ENCODE measurements at regions of chr17 and their contacts with region 1.

Region 1: DNA sequence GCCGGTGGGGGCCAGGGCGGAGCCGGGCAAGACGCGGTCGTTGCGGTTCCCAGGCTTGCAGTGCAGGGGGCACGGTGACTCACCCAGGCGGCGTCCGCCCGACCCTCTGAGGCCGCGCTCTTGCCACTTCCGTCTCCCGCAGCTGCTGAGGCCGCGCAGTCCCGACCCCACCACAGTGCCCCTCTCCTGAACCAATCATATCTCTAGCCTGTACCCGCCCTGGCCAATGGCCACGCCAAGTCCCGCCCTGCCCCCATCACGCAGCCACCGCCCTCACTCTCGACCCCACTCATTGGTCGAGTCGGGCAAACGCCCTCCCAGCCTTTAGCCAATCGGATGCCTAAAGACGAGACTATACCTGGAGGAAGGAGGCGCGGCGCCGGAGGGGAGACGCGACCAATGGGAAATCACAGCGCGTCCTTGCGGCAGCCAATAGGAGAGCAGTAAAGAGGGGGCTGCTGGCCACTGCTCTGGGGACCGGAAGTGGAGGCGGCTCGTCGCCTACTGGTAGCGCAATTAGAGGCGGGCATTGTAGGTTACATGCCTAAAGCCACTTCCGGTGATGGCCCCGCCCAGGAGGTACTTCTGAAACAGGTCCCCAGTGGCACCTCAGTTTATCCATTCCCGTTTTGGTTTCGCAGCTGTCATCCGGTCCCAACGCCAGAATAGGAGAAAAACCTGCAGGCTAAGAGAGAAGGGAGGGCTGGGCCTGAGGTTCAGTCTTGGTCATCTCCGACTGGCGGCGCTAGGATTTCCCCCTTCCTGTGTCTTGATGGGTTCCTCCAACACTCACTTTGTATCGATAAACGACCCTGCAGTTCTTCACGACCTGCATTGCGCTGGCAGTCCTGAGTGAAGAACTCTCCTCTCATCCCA is 3.5 kb upstream of the MTMR4 start:
- DNase-seq: peak; percentile 99 to 100
- H3K4me3 ChIP-seq: peak overlapping the region; percentile 80
- H3K27ac ChIP-seq: peak overlapping the region; percentile 84
- H3K4me1 ChIP-seq: peaks cover 23% of the 10 kb centered on the region
- H3K27me3 ChIP-seq: no peaks in the 10 kb centered on the region
- CTCF ChIP-seq: no peak

Region 2: GRCh38 chr17:58352014-58352842 is 165.7 kb before region 1 on chr17 and contains the start of gene SUPT4H1:
- CTCF ChIA-PET with region 1: no interaction called
- POLR2A ChIA-PET with region 1: no interaction called
- intact Hi-C with region 1: loop called (anchors 1 kb)
- DNase-seq: peak; percentile 83 to 92
- H3K4me3 ChIP-seq: peak within 1 kb of the TSS; percentile 99
- H3K27ac ChIP-seq: peak within 1 kb of the TSS; percentile 64
- H3K4me1 ChIP-seq: peaks cover 16% of the 10 kb centered on the region
- H3K27me3 ChIP-seq: 0 out of 2 replicates have a peak, but pooled peaks cover 4% of the 10 kb centered on the region
- CTCF ChIP-seq: no peak
- total RNA-seq, gene SUPT4H1: 72.2 and 74.8 TPM in 2 replicates

Region 3: DNA sequence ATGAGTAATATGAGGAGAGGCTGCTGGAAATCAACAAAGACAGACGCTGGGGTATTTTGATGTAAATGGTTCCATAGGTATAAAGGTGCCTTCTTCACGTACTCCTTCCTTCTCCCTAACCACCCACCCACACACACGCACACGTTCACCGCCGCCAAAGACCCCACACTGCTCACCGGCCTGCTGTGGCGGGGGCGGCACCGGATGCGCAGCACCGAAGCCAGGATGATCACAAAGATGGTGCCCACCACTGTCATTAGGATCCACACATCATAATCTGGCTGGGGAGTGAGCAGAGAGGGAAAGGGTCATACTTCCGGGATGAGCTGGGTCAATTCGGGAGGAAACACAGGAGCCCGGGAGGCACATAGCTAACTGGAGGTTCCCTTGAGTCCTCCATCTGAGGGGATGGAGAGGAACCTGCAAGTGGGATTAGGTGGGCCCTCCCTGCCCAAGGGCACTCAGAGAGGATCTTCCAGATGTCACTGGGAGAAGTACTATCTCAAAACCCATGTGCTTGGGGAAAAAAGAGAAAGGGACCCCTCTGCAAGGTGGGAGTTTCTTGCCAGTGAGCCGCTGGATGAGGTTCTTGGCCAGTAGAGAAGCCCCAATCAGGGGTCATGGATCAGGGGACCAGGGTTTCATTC is 155.5 kb before region 1 on chr17:
- CTCF ChIA-PET with region 1: no interaction called
- POLR2A ChIA-PET with region 1: no interaction called
- intact Hi-C with region 1: no loop called
- DNase-seq: no peak
- H3K4me3 ChIP-seq: no peak overlapping the region
- H3K27ac ChIP-seq: no peak overlapping the region
- H3K4me1 ChIP-seq: no peaks in the 10 kb centered on the region
- H3K27me3 ChIP-seq: peaks cover 9% of the 10 kb centered on the region; the same call in 1 of the 2 replicates
- CTCF ChIP-seq: no peak

Region 4: GRCh38 chr17:58658804-58659713 is 141.1 kb after region 1 on chr17:
- CTCF ChIA-PET with region 1: no interaction called
- POLR2A ChIA-PET with region 1: interaction called, 6 read pairs
- intact Hi-C with region 1: loop called (anchors 1 kb)
- DNase-seq: peak; percentile 80 to 99
- H3K4me3 ChIP-seq: peak overlapping the region; percentile 61
- H3K27ac ChIP-seq: peak overlapping the region; percentile 89
- H3K4me1 ChIP-seq: peaks cover 14% of the 10 kb centered on the region
- H3K27me3 ChIP-seq: no peaks in the 10 kb centered on the region
- CTCF ChIP-seq: no peak

Region 5: DNA sequence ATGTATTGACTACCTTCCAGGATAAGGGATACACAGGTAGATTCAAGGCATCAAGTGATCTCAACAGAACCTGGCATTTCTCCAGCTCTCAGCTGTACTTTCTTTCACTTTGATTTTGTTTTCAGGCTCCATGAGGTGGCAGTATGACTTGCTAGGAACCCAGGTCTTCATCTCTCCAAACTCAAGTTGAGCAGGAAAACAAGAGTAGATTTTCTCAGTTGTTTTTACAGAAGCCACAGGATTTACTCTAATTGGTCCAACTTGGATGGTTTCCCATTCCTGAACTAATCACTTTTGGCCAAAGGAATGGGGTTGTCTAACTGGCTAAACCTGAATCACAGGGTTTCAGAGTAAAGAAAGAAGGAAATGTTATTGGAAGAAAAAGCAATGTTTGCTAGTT is 442.1 kb after region 1 on chr17:
- CTCF ChIA-PET with region 1: no interaction called
- POLR2A ChIA-PET with region 1: no interaction called
- intact Hi-C with region 1: loop called (anchors 1 kb)
- DNase-seq: peak; percentile 33 to 90
- H3K4me3 ChIP-seq: no peak overlapping the region
- H3K27ac ChIP-seq: no peak overlapping the region
- H3K4me1 ChIP-seq: peaks cover 28% of the 10 kb centered on the region
- H3K27me3 ChIP-seq: no peaks in the 10 kb centered on the region
- CTCF ChIP-seq: peak; percentile 49; the same call in 1 of the 2 replicates

Region 6: DNA sequence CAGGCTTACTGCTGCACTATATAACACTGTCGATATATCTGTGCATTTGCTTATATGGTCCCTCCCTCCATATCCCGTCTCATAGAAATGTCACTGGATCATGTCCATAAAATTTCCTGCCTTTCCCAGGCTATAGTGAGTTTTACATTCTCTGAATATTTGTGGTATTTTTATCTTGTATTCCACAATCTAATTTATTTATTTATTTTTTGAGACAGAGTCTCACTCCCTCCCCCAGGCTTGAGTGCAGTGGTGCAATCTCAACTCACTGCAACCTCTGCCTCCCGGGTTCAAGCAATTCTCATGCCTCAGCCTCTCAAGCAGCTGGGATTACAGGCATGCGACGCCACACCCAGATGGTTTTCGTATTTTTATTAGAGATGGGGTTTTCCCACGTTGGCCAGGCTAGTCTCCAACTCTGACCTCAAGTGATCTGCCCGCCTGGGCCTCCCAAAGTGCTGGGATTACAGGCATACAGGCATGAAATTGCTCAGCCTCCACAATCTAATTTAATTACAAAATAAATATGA is 575.8 kb after region 1 on chr17:
- CTCF ChIA-PET with region 1: no interaction called
- POLR2A ChIA-PET with region 1: no interaction called
- intact Hi-C with region 1: loop called (anchors 5 kb)
- DNase-seq: peak; percentile 72 to 84
- H3K4me3 ChIP-seq: no peak overlapping the region
- H3K27ac ChIP-seq: peak overlapping the region; percentile 66
- H3K4me1 ChIP-seq: peaks cover 29% of the 10 kb centered on the region
- H3K27me3 ChIP-seq: no peaks in the 10 kb centered on the region
- CTCF ChIP-seq: no peak

Region 7: DNA sequence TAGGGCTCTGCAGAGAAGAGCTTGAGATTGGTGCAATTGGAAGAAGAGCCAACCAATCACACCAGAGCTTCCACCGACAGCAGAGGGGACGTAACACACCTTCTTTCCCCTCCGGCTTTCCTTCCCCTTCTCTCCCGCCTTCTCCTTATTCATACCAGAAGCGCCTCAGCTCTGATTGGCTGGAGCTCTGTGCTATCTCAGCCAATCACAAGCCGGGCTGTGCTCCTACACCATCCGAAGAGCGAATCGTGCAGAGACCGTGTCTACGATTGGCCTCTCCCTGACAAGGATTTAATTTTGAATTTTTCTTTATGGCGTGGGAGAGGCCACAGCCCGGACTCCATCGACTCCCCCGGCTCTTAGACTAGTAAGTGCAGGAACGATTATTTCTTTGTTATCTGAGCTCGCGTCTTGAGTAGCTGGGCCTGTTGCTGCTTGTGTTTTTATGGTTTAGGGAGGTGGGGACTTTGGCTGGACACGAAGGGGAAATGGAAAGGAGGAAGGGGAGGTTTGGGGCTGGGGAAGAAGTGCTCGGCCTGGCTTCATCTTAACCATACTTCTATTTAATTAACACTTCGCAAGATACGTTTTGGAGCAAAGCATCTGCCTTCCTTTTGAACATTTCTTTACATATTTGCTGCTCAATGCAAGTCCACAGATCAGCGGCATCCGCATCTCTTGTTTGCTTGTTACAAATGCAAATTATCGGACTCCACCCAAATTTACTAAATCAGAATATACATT is 637.6 kb after region 1 on chr17 and contains the start of gene PRR11:
- CTCF ChIA-PET with region 1: no interaction called
- POLR2A ChIA-PET with region 1: no interaction called
- intact Hi-C with region 1: loop called (anchors 1 kb)
- DNase-seq: peak; percentile 94 to 100
- H3K4me3 ChIP-seq: peak within 1 kb of the TSS; percentile 80
- H3K27ac ChIP-seq: peak within 1 kb of the TSS; percentile 71
- H3K4me1 ChIP-seq: peaks cover 50% of the 10 kb centered on the region
- H3K27me3 ChIP-seq: no peaks in the 10 kb centered on the region
- CTCF ChIP-seq: no peak
- total RNA-seq, gene PRR11: 87.9 and 109 TPM in 2 replicates

Measured in PC-9 (cell line).